Activated B cell treated with CpG ODN at 0.5 μM for 24 hours (primary cell): ENCODE measurements at regions of chr17 and their contacts with region 1.

Region 1: DNA sequence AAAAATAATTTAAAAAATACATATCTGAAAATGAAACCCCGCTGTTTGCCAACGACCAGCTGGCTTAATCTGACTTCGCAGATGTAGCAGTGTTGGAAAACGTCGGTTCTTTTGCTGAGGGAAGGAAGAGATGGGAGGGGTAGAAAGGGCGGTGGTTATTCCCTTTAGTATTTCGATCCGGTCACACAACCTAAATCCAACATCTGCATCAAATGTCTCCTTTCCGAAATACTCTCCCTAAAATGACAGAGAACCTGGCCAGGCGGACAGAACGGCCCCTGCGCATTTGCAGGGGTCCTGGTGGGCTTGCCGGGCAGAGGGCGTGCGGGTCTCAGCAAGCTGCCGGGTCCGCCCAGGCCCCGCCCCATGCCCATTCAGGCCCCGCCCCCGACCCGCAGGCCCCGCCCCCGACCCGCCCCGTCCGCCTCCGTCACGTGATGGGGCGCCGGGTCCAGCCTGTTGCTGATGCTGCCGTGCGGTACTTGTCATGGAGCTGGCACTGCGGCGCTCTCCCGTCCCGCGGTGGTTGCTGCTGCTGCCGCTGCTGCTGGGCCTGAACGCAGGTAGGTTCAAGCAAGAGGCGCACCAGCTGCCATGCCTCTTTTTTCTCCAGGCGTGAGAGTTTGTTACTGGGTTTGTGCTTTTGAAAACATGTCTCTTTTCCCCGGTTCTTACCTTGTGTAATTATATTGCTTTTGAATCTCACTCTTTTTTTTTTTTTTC is at the start of gene SCPEP1:
- DNase-seq: peak; percentile 67
- ATAC-seq: peak; percentile 97
- H3K4me3 Mint-ChIP-seq: peak within 1 kb of the TSS; percentile 91
- H3K27ac Mint-ChIP-seq: peak within 1 kb of the TSS; percentile 89
- H3K4me1 Mint-ChIP-seq: peaks cover 26% of the 10 kb centered on the region
- H3K27me3 Mint-ChIP-seq: no peaks in the 10 kb centered on the region
- CTCF ChIP-seq: no peak
- total RNA-seq, gene SCPEP1: 32.0 and 35.2 TPM in 2 replicates

Region 2: GRCh38 chr17:56960596-56961538 is 17.0 kb before region 1 on chr17 and contains the start of gene COIL:
- CTCF ChIA-PET with region 1: interaction called, 4 read pairs
- POLR2A ChIA-PET with region 1: interaction called, 11 read pairs
- intact Hi-C with region 1: loop called (anchors 1 kb)
- DNase-seq: peak; percentile 90
- ATAC-seq: peak; percentile 98
- H3K4me3 Mint-ChIP-seq: peak within 1 kb of the TSS; percentile 86
- H3K27ac Mint-ChIP-seq: peak within 1 kb of the TSS; percentile 84
- H3K4me1 Mint-ChIP-seq: peaks cover 23% of the 10 kb centered on the region
- H3K27me3 Mint-ChIP-seq: no peaks in the 10 kb centered on the region
- CTCF ChIP-seq: peak; percentile 95
- total RNA-seq, gene COIL: 21.6 and 21.9 TPM in 2 replicates

Region 3: DNA sequence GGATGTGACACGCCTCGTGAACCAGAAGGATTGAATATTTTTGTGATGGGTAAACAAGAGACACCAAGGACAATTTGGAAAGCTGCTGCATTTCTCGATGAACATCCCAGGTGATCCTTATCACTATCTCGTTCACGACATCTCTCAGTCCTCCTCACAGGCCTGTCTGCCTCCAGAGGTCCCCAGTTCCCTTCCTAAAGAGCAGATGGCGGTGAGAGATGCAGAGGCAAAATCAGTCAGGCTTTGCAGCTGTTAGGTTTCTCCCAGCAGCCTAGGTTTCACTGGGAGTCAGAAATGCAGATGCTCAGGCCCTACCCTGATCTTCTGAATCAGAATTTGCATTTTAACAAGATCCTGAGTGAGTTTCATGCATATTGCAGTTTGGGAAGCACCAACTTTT is 23.7 kb after region 1 on chr17:
- CTCF ChIA-PET with region 1: no interaction called
- POLR2A ChIA-PET with region 1: interaction called, 14 read pairs
- intact Hi-C with region 1: no loop called
- DNase-seq: no peak
- ATAC-seq: no peak
- H3K4me3 Mint-ChIP-seq: no peak overlapping the region
- H3K27ac Mint-ChIP-seq: no peak overlapping the region
- H3K4me1 Mint-ChIP-seq: peaks cover 45% of the 10 kb centered on the region
- H3K27me3 Mint-ChIP-seq: no peaks in the 10 kb centered on the region
- CTCF ChIP-seq: no peak